Posterior vena cava (tissue), 2 donors: ENCODE measurements at regions of chr4 and their contacts with region 1.

Region 1: DNA sequence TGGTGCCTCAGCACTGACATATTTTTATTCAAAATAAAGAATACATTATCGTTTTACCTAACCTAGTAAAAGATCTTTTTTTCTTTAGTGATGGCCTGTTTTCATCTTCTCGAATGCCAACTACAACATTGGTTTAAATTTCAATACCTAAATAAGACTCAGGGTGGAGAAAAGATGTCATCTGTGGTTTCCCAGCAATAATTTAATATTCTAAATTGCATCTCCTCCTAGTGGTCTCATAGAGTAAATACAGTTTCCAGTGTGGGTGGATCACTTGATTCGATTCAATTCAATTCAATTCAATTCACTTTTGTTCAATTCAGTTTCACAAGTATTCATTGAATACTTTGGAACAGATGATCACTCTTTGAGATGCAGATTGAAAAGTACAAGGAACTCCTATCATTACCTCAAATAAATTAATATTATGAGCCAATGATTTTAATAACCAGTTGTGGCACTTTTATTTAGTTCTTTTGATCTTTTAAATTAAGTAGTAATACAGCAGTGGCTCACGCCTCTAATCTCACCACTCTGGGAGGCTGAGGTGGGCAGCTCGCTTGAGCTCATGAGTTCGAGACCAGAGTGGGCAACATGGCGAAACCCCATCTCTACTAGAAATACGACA is 427.2 kb downstream of the FAT4 start:
- DNase-seq: no peak

Region 2: GRCh38 chr4:125306112-125306511 is 435.8 kb before region 1 on chr4:
- intact Hi-C with region 1: loop called (anchors 5 kb)
- DNase-seq: no peak

Region 3: GRCh38 chr4:125314676-125315575 is 427.0 kb before region 1 on chr4 and contains the start of gene FAT4:
- intact Hi-C with region 1: loop called in 1 of 2 experiments (anchors 5 kb)
- DNase-seq: peak; percentile 98
- total RNA-seq, gene FAT4: 22.8 to 24.1 TPM

Region 4: GRCh38 chr4:126742048-126742447 is 1000.1 kb after region 1 on chr4:
- intact Hi-C with region 1: no loop called
- DNase-seq: no peak